Naive thymus-derived CD4-positive, alpha-beta T cell (primary cell): ENCODE measurements at regions of chr12 and their contacts with region 1.

Region 1: GRCh38 chr12:22164139-22164538 is 118.1 kb downstream of the CMAS start:
- DNase-seq: peak in 6 of 9 donors; percentile 20 to 43 (median 34)
- ATAC-seq: peak; percentile 75
- H3K4me3 ChIP-seq: peak overlapping the region; percentile 17
- H3K4me3 Mint-ChIP-seq: peak overlapping the region; percentile 20 to 77 (median 60)
- H3K27ac ChIP-seq: peak overlapping the region; percentile 23
- H3K27ac Mint-ChIP-seq: peak overlapping the region; percentile 21 to 86 (median 68)
- H3K4me1 ChIP-seq: peaks cover 22 to 38% of the 10 kb centered on the region in 2 donors
- H3K4me1 Mint-ChIP-seq: peaks cover 21 to 63% (median 60%) of the 10 kb centered on the region in 7 donors
- H3K27me3 ChIP-seq: no peaks in the 10 kb centered on the region
- H3K27me3 Mint-ChIP-seq: no peaks in the 10 kb centered on the region

Region 2: GRCh38 chr12:21690704-21691368 is 473.3 kb before region 1 on chr12:
- CTCF ChIA-PET with region 1: no interaction called
- POLR2A ChIA-PET with region 1: no interaction called
- intact Hi-C with region 1: loop called in 1 of 2 experiments (anchors 5 kb)
- DNase-seq: peak in 6 of 9 donors; percentile 31 to 71 (median 50)
- ATAC-seq: peak; percentile 80
- H3K4me3 ChIP-seq: no peak overlapping the region
- H3K4me3 Mint-ChIP-seq: peak overlapping the region; percentile 0 to 67 (median 35)
- H3K27ac ChIP-seq: peak overlapping the region; percentile 40
- H3K27ac Mint-ChIP-seq: peak overlapping the region; percentile 14 to 88 (median 69)
- H3K4me1 ChIP-seq: peaks cover 3 to 22% of the 10 kb centered on the region in 2 donors
- H3K4me1 Mint-ChIP-seq: peaks cover 11 to 37% (median 27%) of the 10 kb centered on the region in 7 donors
- H3K27me3 ChIP-seq: no peaks in the 10 kb centered on the region
- H3K27me3 Mint-ChIP-seq: peaks cover 0 to 4% (median 0%) of the 10 kb centered on the region in 5 donors

Region 3: GRCh38 chr12:22046090-22046967 is 117.8 kb before region 1 on chr12 and contains the start of gene CMAS:
- CTCF ChIA-PET with region 1: no interaction called
- POLR2A ChIA-PET with region 1: no interaction called
- intact Hi-C with region 1: loop called in 1 of 2 experiments (anchors 5 kb)
- DNase-seq: peak; percentile 49 to 76 (median 65)
- ATAC-seq: peak; percentile 93
- H3K4me3 ChIP-seq: peak within 1 kb of the TSS; percentile 82
- H3K4me3 Mint-ChIP-seq: peak within 1 kb of the TSS; percentile 80 to 99 (median 94)
- H3K27ac ChIP-seq: peak within 1 kb of the TSS; percentile 82
- H3K27ac Mint-ChIP-seq: peak within 1 kb of the TSS; percentile 35 to 95 (median 89)
- H3K4me1 ChIP-seq: peaks cover 10 to 15% of the 10 kb centered on the region in 2 donors
- H3K4me1 Mint-ChIP-seq: peaks cover 27 to 65% (median 48%) of the 10 kb centered on the region in 7 donors
- H3K27me3 ChIP-seq: no peaks in the 10 kb centered on the region
- H3K27me3 Mint-ChIP-seq: no peaks in the 10 kb centered on the region
- total RNA-seq, gene CMAS: 10.1 to 33.6 (median 19.4) TPM

Region 4: GRCh38 chr12:22396253-22396652 is 232.1 kb after region 1 on chr12:
- CTCF ChIA-PET with region 1: no interaction called
- POLR2A ChIA-PET with region 1: no interaction called
- intact Hi-C with region 1: no loop called
- DNase-seq: peak in 7 of 9 donors; percentile 14 to 56 (median 46)
- ATAC-seq: peak; percentile 92
- H3K4me3 ChIP-seq: no peak overlapping the region
- H3K4me3 Mint-ChIP-seq: peak overlapping the region; percentile 44 to 84 (median 73)
- H3K27ac ChIP-seq: peak overlapping the region; percentile 26
- H3K27ac Mint-ChIP-seq: peak overlapping the region; percentile 66 to 93 (median 85)
- H3K4me1 ChIP-seq: peaks cover 34 to 36% of the 10 kb centered on the region in 2 donors
- H3K4me1 Mint-ChIP-seq: peaks cover 20 to 48% (median 42%) of the 10 kb centered on the region in 7 donors
- H3K27me3 ChIP-seq: no peaks in the 10 kb centered on the region
- H3K27me3 Mint-ChIP-seq: no peaks in the 10 kb centered on the region